H1 (cell line): ENCODE measurements at regions of chr19 and their contacts with region 1.

Region 1: GRCh38 chr19:32570081-32570785 is 10.8 kb upstream of the PDCD5 start:
- DNase-seq: peak in 1 of 2 experiments; percentile 64
- H3K4me3 ChIP-seq: no peak overlapping the region
- H3K27ac ChIP-seq: no peak overlapping the region
- H3K4me1 ChIP-seq: no peaks in the 10 kb centered on the region
- H3K27me3 ChIP-seq: peaks cover 0 to 2% (median 0%) of the 10 kb centered on the region in 4 experiments; a peak in 1 of 7 replicates
- CTCF ChIP-seq: peak; percentile 56 to 80 (median 75)
- EP300 ChIP-seq: no peak
- POLR2A ChIP-seq: no peak
- RAD21 ChIP-seq: peak; percentile 90 to 93

Region 2: GRCh38 chr19:32287811-32288227 is 282.4 kb before region 1 on chr19:
- CTCF ChIA-PET with region 1: interaction called, 14 read pairs
- POLR2A ChIA-PET with region 1: no interaction called
- DNase-seq: peak; percentile 34 to 79
- H3K4me3 ChIP-seq: no peak overlapping the region
- H3K27ac ChIP-seq: no peak overlapping the region
- H3K4me1 ChIP-seq: peaks cover 0 to 2% (median 0%) of the 10 kb centered on the region in 4 experiments; a peak in 2 of 7 replicates
- H3K27me3 ChIP-seq: no peaks in the 10 kb centered on the region
- CTCF ChIP-seq: peak; percentile 81 to 84 (median 82)
- EP300 ChIP-seq: no peak
- POLR2A ChIP-seq: no peak
- RAD21 ChIP-seq: peak; percentile 85 to 93

Region 3: DNA sequence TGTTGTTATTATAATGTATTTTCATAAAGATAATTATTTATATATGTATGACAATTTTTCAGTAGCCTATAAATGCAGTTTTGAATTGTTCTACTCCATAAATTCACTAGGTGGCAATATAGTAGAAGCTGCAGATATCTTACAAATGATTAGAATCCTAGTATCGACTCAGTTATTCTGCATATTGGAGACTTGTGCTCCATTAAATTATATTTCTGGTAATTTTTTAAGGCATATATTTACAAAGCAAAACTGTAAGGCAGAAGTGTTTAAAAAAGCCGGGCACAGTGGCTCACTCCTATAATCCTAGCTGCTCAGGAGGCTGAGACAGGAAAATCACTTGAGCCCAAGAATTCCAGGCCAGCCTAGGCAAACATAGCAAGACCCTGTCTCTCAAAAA is 106.0 kb before region 1 on chr19:
- CTCF ChIA-PET with region 1: interaction called, 24 read pairs
- POLR2A ChIA-PET with region 1: no interaction called
- DNase-seq: no peak
- H3K4me3 ChIP-seq: no peak overlapping the region
- H3K27ac ChIP-seq: no peak overlapping the region
- H3K4me1 ChIP-seq: no peaks in the 10 kb centered on the region
- H3K27me3 ChIP-seq: no peaks in the 10 kb centered on the region
- CTCF ChIP-seq: no peak
- EP300 ChIP-seq: no peak
- POLR2A ChIP-seq: no peak
- RAD21 ChIP-seq: no peak

Region 4: DNA sequence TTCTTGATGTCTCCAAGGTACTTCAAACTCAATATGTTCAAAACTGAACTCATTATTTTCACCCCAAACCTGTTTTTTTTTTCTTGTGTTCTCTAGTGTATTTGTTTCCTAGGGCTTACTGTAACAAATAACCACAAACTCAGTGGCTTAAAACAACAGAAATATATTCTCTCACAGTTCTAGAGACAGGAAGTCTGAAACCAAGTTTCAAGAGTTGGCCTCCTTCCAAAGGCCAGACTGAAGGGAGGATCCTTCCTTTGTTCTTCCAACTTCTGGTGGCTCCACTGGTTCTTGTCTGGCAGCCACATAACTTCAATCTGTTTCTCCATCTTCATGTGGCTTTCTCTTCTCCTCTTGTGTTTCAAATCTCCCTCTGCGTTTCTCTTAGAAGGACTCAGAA is 51.2 kb before region 1 on chr19:
- CTCF ChIA-PET with region 1: no interaction called
- POLR2A ChIA-PET with region 1: no interaction called
- DNase-seq: no peak
- H3K4me3 ChIP-seq: no peak overlapping the region
- H3K27ac ChIP-seq: no peak overlapping the region
- H3K4me1 ChIP-seq: no peaks in the 10 kb centered on the region
- H3K27me3 ChIP-seq: no peaks in the 10 kb centered on the region
- CTCF ChIP-seq: no peak
- EP300 ChIP-seq: no peak
- POLR2A ChIP-seq: no peak
- RAD21 ChIP-seq: no peak